ENCODE measurements at regions of chr3 and their contacts with region 1.

Region 1: DNA sequence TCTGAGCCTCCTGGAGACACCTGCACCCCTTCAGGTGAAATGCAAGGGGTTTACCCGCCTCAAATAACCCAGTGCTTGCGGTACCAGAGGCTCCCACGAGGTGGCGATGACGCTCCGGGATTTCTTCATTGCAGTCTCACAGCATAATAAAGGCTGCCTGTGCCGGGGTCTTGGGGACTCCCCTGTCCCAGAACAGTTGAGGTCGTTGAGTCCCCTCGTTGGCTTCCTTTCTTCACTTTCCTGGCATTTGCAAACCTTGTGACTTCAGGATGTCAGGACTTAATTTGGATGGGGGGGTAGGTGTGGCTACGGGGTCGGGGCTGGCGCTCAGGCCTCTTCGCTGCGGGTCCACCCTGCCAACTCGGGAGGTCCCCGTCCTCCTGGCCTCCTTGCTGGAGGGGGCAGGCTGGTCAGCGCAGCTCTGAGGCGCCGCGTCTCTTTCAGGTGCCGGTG is 1.3 kb downstream of the GNAT1 start:
- DNase-seq: peak; percentile 47 to 78
- H3K4me3 ChIP-seq: no peak overlapping the region
- H3K27ac ChIP-seq: no peak overlapping the region
- H3K4me1 ChIP-seq: 0 out of 2 replicates have a peak, but pooled peaks cover 7% of the 10 kb centered on the region
- H3K27me3 ChIP-seq: no peaks in the 10 kb centered on the region
- CTCF ChIP-seq: peak; percentile 91

Region 2: GRCh38 chr3:49703443-49703927 is 489.2 kb before region 1 on chr3:
- CTCF ChIA-PET with region 1: no interaction called
- POLR2A ChIA-PET with region 1: no interaction called
- intact Hi-C with region 1: loop called (anchors 10 kb)
- DNase-seq: peak in 1 of 2 experiments; percentile 77
- H3K4me3 ChIP-seq: no peak overlapping the region
- H3K27ac ChIP-seq: no peak overlapping the region
- H3K4me1 ChIP-seq: no peaks in the 10 kb centered on the region
- H3K27me3 ChIP-seq: no peaks in the 10 kb centered on the region
- CTCF ChIP-seq: peak; percentile 75

Region 3: DNA sequence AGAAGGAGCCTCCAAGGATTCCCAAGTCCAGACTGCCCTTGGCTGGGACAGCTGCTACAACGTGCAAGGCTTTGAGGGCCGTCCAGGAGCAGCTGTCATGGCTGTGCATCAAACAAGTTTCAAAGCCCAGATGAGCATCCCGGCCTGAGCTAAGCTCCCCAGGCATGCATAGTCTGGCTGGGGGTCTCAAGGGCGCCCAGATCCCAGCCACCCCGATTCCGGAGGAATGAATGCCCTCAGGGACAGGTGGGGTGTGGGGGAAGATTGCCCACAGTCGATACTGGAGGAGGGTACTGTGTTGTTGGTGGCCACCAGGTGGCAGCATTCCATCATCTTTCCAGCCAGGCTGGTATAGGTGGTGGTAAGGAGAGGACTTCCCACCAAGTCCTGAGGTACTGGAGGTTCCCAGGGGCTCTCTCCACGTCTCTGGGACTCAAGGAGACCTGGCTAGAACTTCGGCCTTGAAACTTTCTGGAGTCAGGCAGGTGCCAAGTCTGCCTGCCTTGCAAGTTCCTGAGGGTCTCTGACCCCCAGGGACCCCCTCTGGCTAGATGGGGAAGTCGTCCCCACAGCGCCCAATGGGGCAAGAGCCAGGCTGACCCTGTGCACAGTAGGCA is 71.2 kb before region 1 on chr3:
- CTCF ChIA-PET with region 1: interaction called, 4 read pairs
- POLR2A ChIA-PET with region 1: no interaction called
- intact Hi-C with region 1: loop called (anchors 1 kb)
- DNase-seq: peak; percentile 63 to 76
- H3K4me3 ChIP-seq: no peak overlapping the region
- H3K27ac ChIP-seq: no peak overlapping the region
- H3K4me1 ChIP-seq: 0 out of 2 replicates have a peak, but pooled peaks cover 4% of the 10 kb centered on the region
- H3K27me3 ChIP-seq: no peaks in the 10 kb centered on the region
- CTCF ChIP-seq: peak; percentile 87